ENCODE measurements at regions of chr4 and their contacts with region 1.

Region 1: DNA sequence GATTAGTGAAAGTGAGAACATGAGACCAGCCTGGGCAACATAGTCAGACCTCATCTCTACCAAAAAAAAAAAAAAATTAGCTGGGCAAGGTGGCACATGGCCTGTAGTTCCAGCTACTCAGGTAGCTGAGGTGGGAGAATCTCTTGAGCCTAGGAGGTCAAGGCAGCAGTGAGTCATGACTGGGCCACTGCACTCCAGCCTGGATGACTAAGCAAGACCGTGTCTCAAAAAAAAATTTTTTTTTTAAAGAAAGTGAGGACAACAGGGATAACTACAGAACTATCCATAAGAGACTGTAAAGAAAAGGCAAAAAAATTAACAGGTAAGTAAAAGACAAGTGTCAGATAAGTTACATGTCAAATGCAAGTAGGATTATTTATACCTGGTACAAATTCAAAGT is 13.5 kb upstream of the SPP1 start:
- DNase-seq: no peak
- H3K4me3 ChIP-seq: no peak overlapping the region
- H3K27ac ChIP-seq: no peak overlapping the region
- H3K4me1 ChIP-seq: no peaks in the 10 kb centered on the region
- H3K27me3 ChIP-seq: no peaks in the 10 kb centered on the region
- CTCF ChIP-seq: no peak
- POLR2A ChIP-seq: no peak

Region 2: DNA sequence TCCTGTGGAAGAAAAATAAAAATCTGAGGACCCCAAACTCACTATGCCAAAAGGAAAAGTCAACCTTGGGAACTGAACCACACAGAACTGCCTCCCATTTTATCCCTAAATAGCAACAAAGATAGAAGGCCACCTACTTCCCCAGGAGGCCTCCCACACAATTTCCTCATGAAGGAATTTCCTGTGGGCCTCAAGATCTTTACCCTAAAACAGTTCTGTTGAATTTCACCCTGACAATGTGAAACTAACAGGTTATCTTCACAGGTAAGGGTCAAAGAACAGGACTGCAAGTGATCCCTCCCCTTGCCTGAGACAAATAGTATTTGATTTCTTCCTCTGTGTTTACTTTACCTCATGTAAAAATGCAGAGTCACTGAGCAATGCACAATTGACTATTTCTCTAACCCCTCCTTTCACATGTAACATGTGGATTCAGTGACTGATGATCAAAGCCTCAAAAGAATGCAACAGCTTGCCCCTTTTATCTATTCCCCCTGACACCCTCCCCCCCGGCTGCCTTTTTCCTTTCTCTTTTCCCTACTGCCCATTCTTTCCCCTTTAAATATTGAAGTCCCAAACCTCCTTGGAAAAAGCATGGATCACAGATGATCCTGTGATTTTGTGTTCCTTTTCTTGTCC is 95.9 kb before region 1 on chr4:
- intact Hi-C with region 1: loop called (anchors 10 kb)
- DNase-seq: no peak
- H3K4me3 ChIP-seq: no peak overlapping the region
- H3K27ac ChIP-seq: no peak overlapping the region
- H3K4me1 ChIP-seq: no peaks in the 10 kb centered on the region
- H3K27me3 ChIP-seq: no peaks in the 10 kb centered on the region
- CTCF ChIP-seq: no peak
- POLR2A ChIP-seq: no peak

Measured in uterus (tissue), 4 donors.